ENCODE measurements at regions of chr3 and their contacts with region 1.

Region 1: GRCh38 chr3:61561374-61562041 is at the start of gene PTPRG:
- DNase-seq: peak; percentile 61 to 83
- H3K4me3 ChIP-seq: peak within 1 kb of the TSS; percentile 58 to 98 (median 87)
- H3K27ac ChIP-seq: peak within 1 kb of the TSS; percentile 92
- H3K4me1 ChIP-seq: peaks cover 3 to 13% (median 10%) of the 10 kb centered on the region in 4 experiments
- H3K27me3 ChIP-seq: no peaks in the 10 kb centered on the region; a peak in 1 of 7 replicates
- CTCF ChIP-seq: no peak
- EP300 ChIP-seq: no peak
- POLR2A ChIP-seq: peak; percentile 83 to 95
- RAD21 ChIP-seq: no peak
- total RNA-seq, gene PTPRG: 90.1 and 96.2 TPM in 2 replicates

Region 2: DNA sequence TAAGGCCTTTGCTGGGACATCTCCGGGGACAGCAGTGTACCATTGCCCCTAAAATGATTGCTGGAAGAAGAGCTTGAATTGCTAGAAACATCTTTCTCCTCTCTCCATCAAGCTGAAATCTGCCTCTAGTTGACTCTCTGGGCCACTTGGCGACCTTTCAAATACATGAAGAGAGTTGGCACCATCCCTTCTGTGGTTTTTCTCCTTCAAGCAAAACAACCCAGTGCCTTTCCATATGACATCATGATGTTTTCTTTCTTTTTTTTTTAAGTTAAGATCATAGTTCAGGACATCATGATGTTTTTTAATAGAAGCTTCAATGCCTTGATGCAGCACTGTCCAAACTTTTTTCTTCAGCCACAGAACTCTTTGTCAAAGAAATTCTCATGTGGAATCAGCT is 144.2 kb before region 1 on chr3:
- CTCF ChIA-PET with region 1: no interaction called
- POLR2A ChIA-PET with region 1: no interaction called
- DNase-seq: no peak
- H3K4me3 ChIP-seq: no peak overlapping the region
- H3K27ac ChIP-seq: no peak overlapping the region
- H3K4me1 ChIP-seq: no peaks in the 10 kb centered on the region
- H3K27me3 ChIP-seq: no peaks in the 10 kb centered on the region
- CTCF ChIP-seq: no peak
- EP300 ChIP-seq: no peak
- POLR2A ChIP-seq: no peak
- RAD21 ChIP-seq: no peak

Region 3: DNA sequence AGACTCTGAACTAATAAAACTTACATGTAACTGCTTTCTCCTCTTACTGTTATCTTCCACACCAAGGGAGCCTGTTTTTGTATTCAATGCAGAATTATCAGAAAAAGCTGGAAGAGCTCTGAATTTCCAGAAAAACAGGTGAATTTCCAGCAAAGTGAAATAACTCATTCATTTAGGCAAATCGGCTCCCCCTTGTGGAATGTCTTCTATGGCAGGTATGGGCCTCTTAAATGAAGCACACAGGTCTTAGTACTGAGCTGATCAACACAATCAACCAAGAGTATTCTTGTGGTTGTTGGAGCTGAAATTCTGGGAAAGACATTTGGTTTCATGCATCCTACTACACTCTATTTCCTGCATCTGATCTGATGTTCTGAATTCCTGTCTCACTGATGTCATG is 31.2 kb before region 1 on chr3:
- CTCF ChIA-PET with region 1: interaction called, 6 read pairs
- POLR2A ChIA-PET with region 1: interaction called, 24 read pairs
- DNase-seq: no peak
- H3K4me3 ChIP-seq: no peak overlapping the region
- H3K27ac ChIP-seq: no peak overlapping the region
- H3K4me1 ChIP-seq: peaks cover 0 to 4% (median 0%) of the 10 kb centered on the region in 4 experiments; a peak in 1 of 7 replicates
- H3K27me3 ChIP-seq: no peaks in the 10 kb centered on the region; a peak in 1 of 7 replicates
- CTCF ChIP-seq: peak in 2 of 3 experiments; percentile 51 to 78; a peak in 3 of 4 replicates
- EP300 ChIP-seq: no peak
- POLR2A ChIP-seq: no peak
- RAD21 ChIP-seq: peak; percentile 65 to 67

Region 4: GRCh38 chr3:61547625-61548024 is 13.9 kb before region 1 on chr3:
- CTCF ChIA-PET with region 1: interaction called, 8 read pairs
- POLR2A ChIA-PET with region 1: interaction called, 28 read pairs
- DNase-seq: no peak
- H3K4me3 ChIP-seq: no peak overlapping the region
- H3K27ac ChIP-seq: no peak overlapping the region
- H3K4me1 ChIP-seq: no peaks in the 10 kb centered on the region
- H3K27me3 ChIP-seq: no peaks in the 10 kb centered on the region
- CTCF ChIP-seq: no peak
- EP300 ChIP-seq: no peak
- POLR2A ChIP-seq: no peak
- RAD21 ChIP-seq: no peak

Region 5: GRCh38 chr3:61583890-61584875 is 22.7 kb after region 1 on chr3:
- CTCF ChIA-PET with region 1: interaction called, 14 read pairs
- POLR2A ChIA-PET with region 1: interaction called, 200 read pairs
- DNase-seq: no peak
- H3K4me3 ChIP-seq: no peak overlapping the region
- H3K27ac ChIP-seq: 0 out of 2 replicates have a peak overlapping the region, but pooled peaks have one; percentile 4
- H3K4me1 ChIP-seq: peaks cover 0 to 11% (median 5%) of the 10 kb centered on the region in 4 experiments; a peak in 4 of 7 replicates
- H3K27me3 ChIP-seq: no peaks in the 10 kb centered on the region; a peak in 1 of 7 replicates
- CTCF ChIP-seq: no peak
- EP300 ChIP-seq: no peak
- POLR2A ChIP-seq: no peak
- RAD21 ChIP-seq: no peak

Region 6: DNA sequence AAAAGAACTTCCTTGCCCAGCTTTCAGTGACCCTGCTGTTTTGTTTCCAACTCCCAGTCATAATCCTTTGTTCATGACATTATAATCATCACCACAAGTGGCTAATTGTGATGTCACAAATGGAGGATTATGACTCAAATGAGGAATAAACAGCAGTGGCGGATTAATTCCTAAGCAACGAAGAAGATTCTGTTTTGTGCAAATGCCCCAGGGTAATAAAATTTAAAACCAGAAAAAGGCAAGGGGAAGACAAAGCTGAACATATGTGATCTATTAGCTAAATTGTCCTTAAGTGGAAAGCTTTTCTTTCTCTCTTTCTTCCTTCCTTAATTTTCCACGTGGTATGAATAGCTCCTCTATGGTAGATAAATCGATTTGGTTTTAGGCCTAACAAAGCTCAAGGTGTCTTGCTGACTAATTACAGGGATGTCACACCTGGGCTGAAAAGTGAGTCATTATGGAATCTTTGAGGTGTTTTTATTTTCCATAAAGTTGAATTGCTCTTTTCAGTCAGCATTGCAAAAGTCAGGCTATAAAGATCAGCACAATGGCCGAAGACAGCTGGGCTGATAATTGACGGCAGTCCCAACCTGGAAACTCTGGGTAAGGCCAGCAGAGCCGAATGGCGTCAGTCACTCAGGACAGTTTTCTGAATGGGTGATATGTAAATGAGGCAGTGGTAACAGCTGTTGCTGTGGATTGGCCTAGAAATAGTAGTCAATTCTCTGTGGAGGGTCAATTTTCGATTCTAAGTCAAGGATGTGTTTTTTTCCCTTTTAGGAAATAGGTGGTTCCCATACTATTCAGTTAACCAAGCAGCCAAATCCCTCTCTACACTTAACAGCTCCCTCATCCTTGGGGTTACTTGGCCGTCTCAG is 121.4 kb after region 1 on chr3:
- CTCF ChIA-PET with region 1: interaction called, 15 read pairs
- POLR2A ChIA-PET with region 1: interaction called, 22 read pairs
- DNase-seq: no peak
- H3K4me3 ChIP-seq: no peak overlapping the region
- H3K27ac ChIP-seq: no peak overlapping the region
- H3K4me1 ChIP-seq: peaks cover 19 to 65% (median 44%) of the 10 kb centered on the region in 4 experiments
- H3K27me3 ChIP-seq: peaks cover 0 to 4% (median 0%) of the 10 kb centered on the region in 4 experiments; a peak in 1 of 7 replicates
- CTCF ChIP-seq: no peak
- EP300 ChIP-seq: no peak
- POLR2A ChIP-seq: no peak
- RAD21 ChIP-seq: no peak

Region 7: GRCh38 chr3:61778145-61778494 is 216.6 kb after region 1 on chr3:
- CTCF ChIA-PET with region 1: interaction called, 10 read pairs
- POLR2A ChIA-PET with region 1: interaction called, 5 read pairs
- DNase-seq: no peak
- H3K4me3 ChIP-seq: no peak overlapping the region
- H3K27ac ChIP-seq: no peak overlapping the region
- H3K4me1 ChIP-seq: peaks cover 2 to 9% (median 5%) of the 10 kb centered on the region in 4 experiments; a peak in 4 of 7 replicates
- H3K27me3 ChIP-seq: no peaks in the 10 kb centered on the region
- CTCF ChIP-seq: peak in 2 of 3 experiments; percentile 23 to 41; a peak in 2 of 4 replicates
- EP300 ChIP-seq: no peak
- POLR2A ChIP-seq: no peak
- RAD21 ChIP-seq: peak; percentile 61 to 66

Region 8: DNA sequence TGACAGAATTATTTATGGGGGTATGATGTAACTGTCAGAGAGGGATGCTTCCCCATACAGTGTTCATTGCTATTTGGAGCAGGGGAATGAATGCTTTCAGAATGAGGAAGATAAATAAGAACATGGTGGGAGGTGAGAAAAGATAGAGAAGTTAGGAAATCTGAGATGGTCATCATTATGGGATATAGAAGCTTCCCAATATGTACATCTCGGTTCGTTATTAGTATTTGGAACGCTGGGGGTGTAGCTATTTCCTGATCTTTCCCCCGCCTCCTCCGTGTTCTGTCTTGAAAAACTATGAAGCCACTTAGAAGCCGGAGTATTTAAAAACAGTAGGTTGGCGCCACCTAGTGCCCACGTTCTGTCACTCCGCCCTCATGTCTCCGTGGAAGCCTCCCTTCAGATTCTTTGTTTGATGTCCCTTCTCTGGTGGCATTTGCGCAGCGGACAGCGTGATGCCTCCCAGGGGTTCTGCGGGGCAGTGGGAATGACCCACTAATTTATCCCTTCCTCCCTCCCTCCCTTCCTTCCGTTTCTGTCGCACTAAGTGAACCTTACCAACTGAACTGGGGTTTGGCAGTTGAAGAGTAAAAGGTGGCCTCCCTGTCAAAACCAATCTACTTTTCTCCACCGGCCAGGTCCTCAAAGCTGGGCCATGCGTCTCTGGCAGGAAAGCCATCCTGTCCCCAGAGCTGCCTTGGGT is 627.3 kb after region 1 on chr3:
- CTCF ChIA-PET with region 1: interaction called, 27 read pairs
- POLR2A ChIA-PET with region 1: interaction called, 5 read pairs
- DNase-seq: peak; percentile 41 to 82
- H3K4me3 ChIP-seq: no peak overlapping the region
- H3K27ac ChIP-seq: no peak overlapping the region
- H3K4me1 ChIP-seq: peaks cover 0 to 5% (median 3%) of the 10 kb centered on the region in 4 experiments; a peak in 4 of 7 replicates
- H3K27me3 ChIP-seq: no peaks in the 10 kb centered on the region
- CTCF ChIP-seq: peak; percentile 73 to 84 (median 75)
- EP300 ChIP-seq: no peak
- POLR2A ChIP-seq: no peak
- RAD21 ChIP-seq: peak; percentile 85 to 90